Naive thymus-derived CD4-positive, alpha-beta T cell (primary cell): ENCODE measurements at regions of chr7 and their contacts with region 1.

Region 1: DNA sequence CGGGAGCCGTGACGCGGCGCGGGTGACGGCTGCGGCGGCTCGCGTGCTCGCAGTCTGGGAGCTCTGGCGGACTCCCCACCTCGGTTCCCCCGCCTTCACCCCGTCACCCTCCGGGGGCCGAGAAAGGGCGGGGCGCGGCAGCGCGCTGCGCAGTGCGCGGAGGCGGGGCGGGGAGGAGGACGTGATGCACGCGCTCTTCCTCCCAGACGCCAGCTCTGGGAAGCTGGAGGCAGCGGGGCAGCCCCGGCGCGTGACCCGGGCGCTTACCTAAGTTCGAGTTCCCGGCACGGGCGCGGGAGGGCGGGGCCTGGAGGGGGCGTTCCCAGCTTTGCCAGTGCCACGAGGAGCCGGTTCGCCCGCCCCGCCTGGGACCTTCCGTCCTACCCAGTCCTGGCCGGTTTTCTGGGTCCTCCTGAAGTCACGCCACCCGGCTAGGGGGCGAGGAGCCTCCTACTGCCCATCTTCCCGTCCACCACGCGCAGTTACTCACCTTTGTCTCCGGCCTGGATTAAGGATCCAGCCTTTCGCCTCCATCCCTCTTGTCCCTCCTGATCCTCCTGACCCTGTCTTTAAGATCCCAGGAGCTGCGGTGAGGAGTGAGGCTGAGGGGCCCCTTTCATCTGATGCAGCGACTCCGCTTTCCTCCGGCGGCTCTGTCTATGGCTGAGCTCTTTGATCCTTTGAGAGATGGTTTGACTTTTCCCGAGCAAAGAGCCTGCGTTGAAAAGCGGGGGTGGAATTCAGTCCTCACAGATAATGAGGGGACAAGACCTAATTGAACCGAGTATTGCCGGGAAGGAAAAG is 470 bp upstream of the NAMPT start:
- DNase-seq: peak; percentile 92 to 99 (median 96)
- ATAC-seq: peak; percentile 94
- H3K4me3 ChIP-seq: peak overlapping the region; percentile 94
- H3K4me3 Mint-ChIP-seq: peak overlapping the region; percentile 91 to 99 (median 96)
- H3K27ac ChIP-seq: peak overlapping the region; percentile 94
- H3K27ac Mint-ChIP-seq: peak overlapping the region; percentile 84 to 99 (median 98)
- H3K4me1 ChIP-seq: peaks cover 9 to 10% of the 10 kb centered on the region in 2 donors
- H3K4me1 Mint-ChIP-seq: peaks cover 17 to 46% (median 33%) of the 10 kb centered on the region in 7 donors
- H3K27me3 ChIP-seq: no peaks in the 10 kb centered on the region
- H3K27me3 Mint-ChIP-seq: peaks cover 0 to under 1% (median 0%) of the 10 kb centered on the region in 5 donors

Region 2: GRCh38 chr7:104943502-104944343 is 1341.5 kb before region 1 on chr7:
- CTCF ChIA-PET with region 1: no interaction called
- POLR2A ChIA-PET with region 1: no interaction called
- intact Hi-C with region 1: loop called in 1 of 2 experiments (anchors 5 kb)
- DNase-seq: peak; percentile 31 to 85 (median 68)
- ATAC-seq: peak; percentile 23
- H3K4me3 ChIP-seq: peak overlapping the region; percentile 40
- H3K4me3 Mint-ChIP-seq: peak overlapping the region; percentile 77 to 95 (median 88)
- H3K27ac ChIP-seq: peak overlapping the region; percentile 87
- H3K27ac Mint-ChIP-seq: peak overlapping the region; percentile 95 to 100 (median 100)
- H3K4me1 ChIP-seq: peaks cover 46 to 50% of the 10 kb centered on the region in 2 donors
- H3K4me1 Mint-ChIP-seq: peaks cover 45 to 79% (median 70%) of the 10 kb centered on the region in 7 donors
- H3K27me3 ChIP-seq: no peaks in the 10 kb centered on the region
- H3K27me3 Mint-ChIP-seq: peaks cover 0 to 2% (median 0%) of the 10 kb centered on the region in 5 donors

Region 3: GRCh38 chr7:105678811-105679495 is 606.3 kb before region 1 on chr7:
- CTCF ChIA-PET with region 1: no interaction called
- POLR2A ChIA-PET with region 1: no interaction called
- intact Hi-C with region 1: loop called in 1 of 2 experiments (anchors 5 kb)
- DNase-seq: peak in 5 of 9 donors; percentile 11 to 33 (median 26)
- ATAC-seq: peak; percentile 47
- H3K4me3 ChIP-seq: peak overlapping the region; percentile 30
- H3K4me3 Mint-ChIP-seq: peak overlapping the region; percentile 76 to 97 (median 86)
- H3K27ac ChIP-seq: peak overlapping the region; percentile 59
- H3K27ac Mint-ChIP-seq: peak overlapping the region; percentile 87 to 99 (median 95)
- H3K4me1 ChIP-seq: peaks cover 41 to 43% of the 10 kb centered on the region in 2 donors
- H3K4me1 Mint-ChIP-seq: peaks cover 56 to 94% (median 86%) of the 10 kb centered on the region in 7 donors
- H3K27me3 ChIP-seq: no peaks in the 10 kb centered on the region
- H3K27me3 Mint-ChIP-seq: no peaks in the 10 kb centered on the region

Region 4: GRCh38 chr7:106022193-106022821 is 262.9 kb before region 1 on chr7:
- CTCF ChIA-PET with region 1: no interaction called
- POLR2A ChIA-PET with region 1: no interaction called
- intact Hi-C with region 1: loop called in 1 of 2 experiments (anchors 1 kb)
- DNase-seq: peak; percentile 38 to 96 (median 93)
- ATAC-seq: peak; percentile 89
- H3K4me3 ChIP-seq: peak overlapping the region; percentile 23
- H3K4me3 Mint-ChIP-seq: peak overlapping the region; percentile 43 to 82 (median 68)
- H3K27ac ChIP-seq: peak overlapping the region; percentile 87
- H3K27ac Mint-ChIP-seq: peak overlapping the region; percentile 86 to 99 (median 98)
- H3K4me1 ChIP-seq: peaks cover 30 to 76% of the 10 kb centered on the region in 2 donors
- H3K4me1 Mint-ChIP-seq: peaks cover 23 to 89% (median 85%) of the 10 kb centered on the region in 7 donors
- H3K27me3 ChIP-seq: no peaks in the 10 kb centered on the region
- H3K27me3 Mint-ChIP-seq: peaks cover 0 to 15% (median 0%) of the 10 kb centered on the region in 5 donors

Region 5: DNA sequence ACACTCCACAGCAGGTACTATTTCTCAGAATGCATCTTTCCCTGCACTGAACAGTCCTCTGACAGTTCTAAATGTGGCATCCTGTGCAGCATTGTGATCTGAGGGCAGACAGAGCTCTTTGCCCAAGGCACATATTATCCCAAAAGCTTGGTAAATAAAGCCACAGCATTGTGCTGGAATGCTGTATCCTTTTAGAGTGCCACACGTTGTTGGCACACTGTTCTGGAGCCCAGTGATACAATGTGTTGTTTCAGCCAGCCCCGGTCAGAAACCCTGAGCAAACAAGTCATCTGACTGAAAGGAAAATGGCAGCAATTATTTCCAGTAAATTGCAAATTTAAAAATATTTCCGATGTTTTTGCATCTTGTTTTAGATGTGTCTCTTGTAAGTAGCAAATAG is 45.8 kb before region 1 on chr7:
- CTCF ChIA-PET with region 1: no interaction called
- POLR2A ChIA-PET with region 1: no interaction called
- intact Hi-C with region 1: no loop called
- DNase-seq: no peak
- ATAC-seq: no peak
- H3K4me3 ChIP-seq: no peak overlapping the region
- H3K4me3 Mint-ChIP-seq: no peak overlapping the region
- H3K27ac ChIP-seq: no peak overlapping the region
- H3K27ac Mint-ChIP-seq: no peak overlapping the region
- H3K4me1 ChIP-seq: no peaks in the 10 kb centered on the region
- H3K4me1 Mint-ChIP-seq: no peaks in the 10 kb centered on the region
- H3K27me3 ChIP-seq: no peaks in the 10 kb centered on the region
- H3K27me3 Mint-ChIP-seq: peaks cover 0 to 8% (median 0%) of the 10 kb centered on the region in 5 donors

Region 6: GRCh38 chr7:106260136-106260561 is 25.1 kb before region 1 on chr7:
- CTCF ChIA-PET with region 1: no interaction called
- POLR2A ChIA-PET with region 1: no interaction called
- intact Hi-C with region 1: loop called in 1 of 2 experiments (anchors 1 kb)
- DNase-seq: no peak
- ATAC-seq: peak; percentile 1
- H3K4me3 ChIP-seq: no peak overlapping the region
- H3K4me3 Mint-ChIP-seq: peak overlapping the region in 1 of 10 donors; percentile 41
- H3K27ac ChIP-seq: no peak overlapping the region
- H3K27ac Mint-ChIP-seq: peak overlapping the region in 4 of 9 donors; percentile 19 to 60 (median 46)
- H3K4me1 ChIP-seq: peaks cover 0 to 8% of the 10 kb centered on the region in 2 donors
- H3K4me1 Mint-ChIP-seq: peaks cover 10 to 43% (median 15%) of the 10 kb centered on the region in 7 donors
- H3K27me3 ChIP-seq: no peaks in the 10 kb centered on the region
- H3K27me3 Mint-ChIP-seq: no peaks in the 10 kb centered on the region

Region 7: DNA sequence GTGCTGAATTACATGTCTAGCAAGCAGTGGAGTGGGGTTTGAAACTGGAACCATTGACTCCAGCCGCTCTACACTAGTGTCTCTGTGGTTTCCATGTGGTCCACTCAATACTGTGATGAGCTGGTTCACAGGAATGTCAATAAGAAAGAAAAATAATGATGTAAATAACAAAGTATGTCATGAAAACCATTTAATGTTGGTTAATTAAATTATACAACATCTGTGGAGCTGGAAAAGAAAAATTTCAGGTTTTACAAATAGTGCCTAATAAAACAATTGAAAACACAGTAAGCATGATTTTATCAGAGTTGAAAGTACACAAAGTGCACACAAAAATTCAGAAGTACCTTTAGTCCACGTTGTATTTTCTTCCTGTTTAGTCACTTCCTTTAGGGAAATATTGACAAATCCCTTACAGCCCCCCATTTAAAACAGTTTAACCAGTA is 28.2 kb after region 1 on chr7:
- CTCF ChIA-PET with region 1: no interaction called
- POLR2A ChIA-PET with region 1: no interaction called
- intact Hi-C with region 1: no loop called
- DNase-seq: no peak
- ATAC-seq: no peak
- H3K4me3 ChIP-seq: no peak overlapping the region
- H3K4me3 Mint-ChIP-seq: no peak overlapping the region
- H3K27ac ChIP-seq: no peak overlapping the region
- H3K27ac Mint-ChIP-seq: no peak overlapping the region
- H3K4me1 ChIP-seq: no peaks in the 10 kb centered on the region
- H3K4me1 Mint-ChIP-seq: peaks cover 0 to 7% (median 0%) of the 10 kb centered on the region in 7 donors
- H3K27me3 ChIP-seq: no peaks in the 10 kb centered on the region
- H3K27me3 Mint-ChIP-seq: peaks cover 0 to 28% (median 19%) of the 10 kb centered on the region in 5 donors

Region 8: GRCh38 chr7:106461993-106462859 is 177.0 kb after region 1 on chr7:
- CTCF ChIA-PET with region 1: no interaction called
- POLR2A ChIA-PET with region 1: no interaction called
- intact Hi-C with region 1: loop called in 1 of 2 experiments (anchors 2 kb)
- DNase-seq: peak in 5 of 9 donors; percentile 11 to 32 (median 14)
- ATAC-seq: peak; percentile 51
- H3K4me3 ChIP-seq: no peak overlapping the region
- H3K4me3 Mint-ChIP-seq: no peak overlapping the region
- H3K27ac ChIP-seq: no peak overlapping the region
- H3K27ac Mint-ChIP-seq: peak overlapping the region in 1 of 9 donors; percentile 14
- H3K4me1 ChIP-seq: no peaks in the 10 kb centered on the region
- H3K4me1 Mint-ChIP-seq: peaks cover 0 to 14% (median 0%) of the 10 kb centered on the region in 7 donors
- H3K27me3 ChIP-seq: no peaks in the 10 kb centered on the region
- H3K27me3 Mint-ChIP-seq: no peaks in the 10 kb centered on the region

Region 9: DNA sequence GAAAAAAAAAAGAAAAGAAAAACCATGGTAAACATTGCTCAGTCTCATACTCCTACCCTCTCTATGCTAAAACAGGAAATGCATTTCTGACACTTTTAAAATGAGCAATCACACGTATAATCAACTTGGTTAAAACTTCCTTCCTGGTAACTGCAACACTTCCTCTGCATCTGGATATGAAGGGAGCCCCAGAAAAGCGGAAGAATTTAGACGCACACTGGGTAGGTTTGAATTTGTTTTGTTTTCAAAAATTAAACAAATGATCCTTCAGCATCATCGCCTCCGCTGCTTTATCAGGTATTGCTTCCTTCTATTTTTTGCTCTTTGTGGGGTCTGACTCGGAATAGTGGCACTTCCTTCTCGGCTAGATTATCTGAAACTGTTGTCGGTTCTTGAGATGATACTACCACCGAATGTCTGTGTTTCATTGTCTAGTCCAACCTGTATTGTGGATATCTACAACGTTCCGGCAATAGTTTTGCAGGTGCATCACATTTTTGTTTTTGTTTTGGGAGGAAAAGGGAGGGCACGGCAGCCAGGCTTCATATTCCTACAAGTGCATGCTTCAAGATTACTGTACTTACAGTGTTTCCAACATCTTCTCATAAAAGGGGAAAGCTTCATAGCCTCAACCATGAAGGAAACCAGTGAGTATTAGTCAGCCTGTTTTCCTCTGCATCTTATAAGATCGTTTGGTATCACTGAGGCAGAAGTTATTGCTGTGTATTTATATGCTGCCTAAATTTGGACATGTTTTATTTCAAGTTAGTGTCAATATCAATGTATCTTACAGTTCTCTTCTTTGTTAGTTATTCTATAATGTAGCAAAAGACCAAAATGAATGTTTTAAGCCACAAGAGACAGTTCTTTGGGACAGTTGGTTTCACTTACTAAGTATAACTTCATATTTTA is 580.1 kb after region 1 on chr7 and contains the start of gene PIK3CG:
- CTCF ChIA-PET with region 1: no interaction called
- POLR2A ChIA-PET with region 1: no interaction called
- intact Hi-C with region 1: loop called in 1 of 2 experiments (anchors 5 kb)
- DNase-seq: peak in 7 of 9 donors; percentile 43 to 77 (median 70)
- ATAC-seq: peak; percentile 96
- H3K4me3 ChIP-seq: peak within 1 kb of the TSS; percentile 62
- H3K4me3 Mint-ChIP-seq: peak within 1 kb of the TSS; percentile 86 to 98 (median 94)
- H3K27ac ChIP-seq: peak within 1 kb of the TSS; percentile 75
- H3K27ac Mint-ChIP-seq: peak within 1 kb of the TSS; percentile 90 to 96 (median 95)
- H3K4me1 ChIP-seq: peaks cover 50% of the 10 kb centered on the region in 2 donors
- H3K4me1 Mint-ChIP-seq: peaks cover 44 to 85% (median 72%) of the 10 kb centered on the region in 7 donors
- H3K27me3 ChIP-seq: no peaks in the 10 kb centered on the region
- H3K27me3 Mint-ChIP-seq: no peaks in the 10 kb centered on the region
- total RNA-seq, gene PIK3CG: 25.1 to 54.9 (median 30.6) TPM